CD8-positive, alpha-beta T cell (primary cell): ENCODE measurements at regions of chr13 and their contacts with region 1.

Region 1: GRCh38 chr13:30132623-30133553 is 174.5 kb downstream of the KATNAL1 start:
- DNase-seq: peak; percentile 92 to 100 (median 97)
- ATAC-seq: peak; percentile 100
- H3K4me3 ChIP-seq: no peak overlapping the region
- H3K4me3 Mint-ChIP-seq: peak overlapping the region; percentile 65
- H3K27ac ChIP-seq: no peak overlapping the region
- H3K27ac Mint-ChIP-seq: peak overlapping the region; percentile 77
- H3K4me1 ChIP-seq: peaks cover 9% of the 10 kb centered on the region
- H3K4me1 Mint-ChIP-seq: peaks cover 12% of the 10 kb centered on the region
- H3K27me3 ChIP-seq: no peaks in the 10 kb centered on the region
- H3K27me3 Mint-ChIP-seq: no peaks in the 10 kb centered on the region
- CTCF ChIP-seq: peak; percentile 79

Region 2: GRCh38 chr13:29196409-29197074 is 936.3 kb before region 1 on chr13:
- CTCF ChIA-PET with region 1: no interaction called
- POLR2A ChIA-PET with region 1: no interaction called
- intact Hi-C with region 1: no loop called
- DNase-seq: no peak
- ATAC-seq: no peak
- H3K4me3 ChIP-seq: no peak overlapping the region
- H3K4me3 Mint-ChIP-seq: no peak overlapping the region
- H3K27ac ChIP-seq: no peak overlapping the region
- H3K27ac Mint-ChIP-seq: no peak overlapping the region
- H3K4me1 ChIP-seq: no peaks in the 10 kb centered on the region
- H3K4me1 Mint-ChIP-seq: no peaks in the 10 kb centered on the region
- H3K27me3 ChIP-seq: no peaks in the 10 kb centered on the region
- H3K27me3 Mint-ChIP-seq: no peaks in the 10 kb centered on the region
- CTCF ChIP-seq: no peak

Region 3: DNA sequence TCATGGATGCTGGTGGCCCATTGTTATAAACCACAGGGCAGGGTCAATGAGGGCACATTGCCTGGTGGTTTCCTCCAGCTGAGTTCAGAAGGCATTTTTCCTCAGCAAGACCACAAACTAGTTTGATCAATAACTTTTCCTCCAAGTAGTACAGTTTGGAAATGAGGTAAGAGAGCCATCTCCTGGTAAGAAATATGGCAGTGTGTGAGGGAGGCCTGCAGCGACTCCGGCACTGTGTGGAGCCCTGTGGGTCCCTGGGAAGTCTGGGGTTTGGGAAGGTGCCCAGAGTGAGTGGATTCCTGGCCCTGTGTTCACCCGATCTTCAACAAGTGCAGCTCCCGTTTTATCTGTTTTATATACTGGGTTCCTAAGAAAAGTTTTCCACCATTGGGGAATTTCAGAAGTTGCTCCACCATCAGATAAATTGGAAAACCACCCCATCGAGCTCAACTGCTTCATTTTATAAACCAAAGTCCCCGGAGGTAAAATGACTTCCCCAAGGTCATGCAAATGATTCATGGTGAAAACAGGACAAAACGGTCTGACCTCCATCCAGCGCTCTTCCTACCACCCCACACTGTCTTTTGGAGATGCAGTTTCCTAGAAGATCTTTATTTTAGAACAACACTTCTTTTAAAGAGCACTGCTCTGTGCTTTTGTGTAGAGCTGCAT is 26.0 kb after region 1 on chr13:
- CTCF ChIA-PET with region 1: interaction called, 630 read pairs
- POLR2A ChIA-PET with region 1: interaction called, 19 read pairs
- intact Hi-C with region 1: loop called (anchors 1 kb)
- DNase-seq: peak in 2 of 9 experiments; percentile 63 to 74
- ATAC-seq: peak; percentile 59
- H3K4me3 ChIP-seq: no peak overlapping the region
- H3K4me3 Mint-ChIP-seq: no peak overlapping the region
- H3K27ac ChIP-seq: peak overlapping the region in 1 of 2 experiments; percentile 18
- H3K27ac Mint-ChIP-seq: peak overlapping the region; percentile 68
- H3K4me1 ChIP-seq: peaks cover 13% of the 10 kb centered on the region
- H3K4me1 Mint-ChIP-seq: peaks cover 30% of the 10 kb centered on the region
- H3K27me3 ChIP-seq: no peaks in the 10 kb centered on the region
- H3K27me3 Mint-ChIP-seq: no peaks in the 10 kb centered on the region
- CTCF ChIP-seq: peak; percentile 32

Region 4: GRCh38 chr13:30334663-30335386 is 201.9 kb after region 1 on chr13:
- CTCF ChIA-PET with region 1: interaction called, 9 read pairs
- POLR2A ChIA-PET with region 1: no interaction called
- intact Hi-C with region 1: loop called (anchors 1 to 5 kb)
- DNase-seq: peak in 3 of 9 experiments; percentile 20 to 58 (median 53)
- ATAC-seq: no peak
- H3K4me3 ChIP-seq: no peak overlapping the region
- H3K4me3 Mint-ChIP-seq: no peak overlapping the region
- H3K27ac ChIP-seq: no peak overlapping the region
- H3K27ac Mint-ChIP-seq: no peak overlapping the region
- H3K4me1 ChIP-seq: no peaks in the 10 kb centered on the region
- H3K4me1 Mint-ChIP-seq: peaks cover 16% of the 10 kb centered on the region
- H3K27me3 ChIP-seq: no peaks in the 10 kb centered on the region
- H3K27me3 Mint-ChIP-seq: no peaks in the 10 kb centered on the region
- CTCF ChIP-seq: no peak

Region 5: DNA sequence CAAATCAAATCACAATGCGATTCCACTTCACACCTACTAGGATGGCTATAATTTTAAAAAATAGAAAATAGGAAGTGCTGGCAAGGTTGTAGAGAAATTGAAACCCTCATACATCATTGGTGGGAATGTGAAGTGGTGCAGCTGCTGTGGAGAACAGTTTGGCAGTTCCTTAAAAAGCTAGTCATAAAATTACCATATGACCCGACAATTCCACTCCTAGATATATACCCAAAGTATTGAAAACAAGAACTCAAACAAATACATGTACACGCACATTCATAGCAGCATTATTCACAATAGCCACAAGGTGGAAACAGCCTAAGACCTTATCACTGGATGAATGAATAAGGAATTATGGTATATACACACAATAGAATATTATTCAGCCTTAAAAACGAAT is 320.8 kb after region 1 on chr13:
- CTCF ChIA-PET with region 1: interaction called, 11 read pairs
- POLR2A ChIA-PET with region 1: interaction called, 3 read pairs
- intact Hi-C with region 1: no loop called
- DNase-seq: no peak
- ATAC-seq: no peak
- H3K4me3 ChIP-seq: no peak overlapping the region
- H3K4me3 Mint-ChIP-seq: no peak overlapping the region
- H3K27ac ChIP-seq: no peak overlapping the region
- H3K27ac Mint-ChIP-seq: no peak overlapping the region
- H3K4me1 ChIP-seq: no peaks in the 10 kb centered on the region
- H3K4me1 Mint-ChIP-seq: peaks cover 15% of the 10 kb centered on the region
- H3K27me3 ChIP-seq: no peaks in the 10 kb centered on the region
- H3K27me3 Mint-ChIP-seq: no peaks in the 10 kb centered on the region
- CTCF ChIP-seq: no peak

Region 6: DNA sequence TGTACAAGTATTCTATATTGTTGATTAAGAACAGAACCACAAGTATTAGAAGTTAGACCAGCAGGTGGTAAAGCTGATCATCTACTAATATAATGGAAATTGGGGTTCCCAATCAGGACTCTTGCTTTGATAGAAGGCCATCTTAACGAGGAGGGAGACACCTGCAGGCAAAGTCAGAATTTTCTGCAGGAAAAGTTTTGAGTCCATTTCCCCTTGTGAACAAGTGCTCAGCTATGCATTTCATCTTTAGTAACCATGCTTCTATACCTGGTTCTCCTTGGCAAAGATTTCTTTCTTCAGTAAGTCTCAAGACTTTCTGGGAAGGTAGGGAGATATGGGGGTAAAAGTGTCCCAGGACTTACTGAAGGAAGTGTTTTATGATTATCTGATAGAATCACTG is 448.7 kb after region 1 on chr13:
- CTCF ChIA-PET with region 1: interaction called, 14 read pairs
- POLR2A ChIA-PET with region 1: interaction called, 3 read pairs
- intact Hi-C with region 1: no loop called
- DNase-seq: peak in 2 of 9 experiments; percentile 39 to 46
- ATAC-seq: no peak
- H3K4me3 ChIP-seq: no peak overlapping the region
- H3K4me3 Mint-ChIP-seq: no peak overlapping the region
- H3K27ac ChIP-seq: no peak overlapping the region
- H3K27ac Mint-ChIP-seq: no peak overlapping the region
- H3K4me1 ChIP-seq: peaks cover 12% of the 10 kb centered on the region
- H3K4me1 Mint-ChIP-seq: peaks cover 17% of the 10 kb centered on the region
- H3K27me3 ChIP-seq: no peaks in the 10 kb centered on the region
- H3K27me3 Mint-ChIP-seq: peaks cover 2% of the 10 kb centered on the region
- CTCF ChIP-seq: no peak